Astrocyte of the cerebellum (primary cell): ENCODE measurements at regions of chr5 and their contacts with region 1.

Region 1: DNA sequence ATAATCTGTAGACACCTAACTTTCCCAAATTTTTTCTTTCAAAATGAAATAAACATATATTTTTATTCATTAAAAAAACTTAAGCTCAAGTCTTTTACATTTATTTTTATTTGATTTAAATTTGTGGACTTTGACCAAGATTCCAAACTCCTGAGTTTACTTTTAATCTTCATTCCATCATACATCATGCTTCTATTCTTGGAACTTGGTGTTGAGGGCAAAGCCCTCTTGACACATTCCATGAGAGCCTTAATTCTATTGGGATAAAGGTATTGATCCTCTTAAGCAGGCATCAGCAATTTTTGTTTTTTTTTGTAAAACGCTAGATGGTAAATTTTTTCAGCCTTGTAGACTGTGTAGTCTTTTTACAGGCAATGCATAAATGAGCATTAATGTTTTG is 53.6 kb downstream of the FBXO4 start:
- DNase-seq: no peak
- H3K4me3 ChIP-seq: no peak overlapping the region
- CTCF ChIP-seq: no peak

Region 2: GRCh38 chr5:41695920-41696582 is 282.6 kb before region 1 on chr5:
- in situ Hi-C with region 1: no loop called
- DNase-seq: no peak
- H3K4me3 ChIP-seq: no peak overlapping the region
- CTCF ChIP-seq: peak; percentile 35

Region 3: DNA sequence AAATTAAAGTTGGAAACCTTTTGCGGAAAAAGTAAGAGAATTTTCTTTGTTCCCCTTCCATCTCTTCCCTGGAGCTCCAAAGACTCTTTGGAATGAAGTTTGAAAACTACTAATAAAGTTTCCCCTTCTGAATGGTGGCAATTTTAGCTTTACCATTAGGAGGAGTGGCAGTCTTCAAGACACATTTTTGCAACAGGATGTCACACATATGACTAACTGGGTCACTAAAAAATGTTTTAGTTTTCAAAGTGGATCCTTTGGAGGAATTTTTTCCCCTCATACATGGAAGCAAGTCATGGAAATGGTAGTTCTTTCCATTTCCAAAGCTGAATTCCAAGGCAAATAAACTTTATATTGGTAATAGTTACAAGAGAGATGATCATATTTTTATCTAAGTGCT is 38.0 kb before region 1 on chr5:
- in situ Hi-C with region 1: loop called (anchors 5 kb)
- DNase-seq: no peak
- H3K4me3 ChIP-seq: no peak overlapping the region
- CTCF ChIP-seq: no peak

Region 4: DNA sequence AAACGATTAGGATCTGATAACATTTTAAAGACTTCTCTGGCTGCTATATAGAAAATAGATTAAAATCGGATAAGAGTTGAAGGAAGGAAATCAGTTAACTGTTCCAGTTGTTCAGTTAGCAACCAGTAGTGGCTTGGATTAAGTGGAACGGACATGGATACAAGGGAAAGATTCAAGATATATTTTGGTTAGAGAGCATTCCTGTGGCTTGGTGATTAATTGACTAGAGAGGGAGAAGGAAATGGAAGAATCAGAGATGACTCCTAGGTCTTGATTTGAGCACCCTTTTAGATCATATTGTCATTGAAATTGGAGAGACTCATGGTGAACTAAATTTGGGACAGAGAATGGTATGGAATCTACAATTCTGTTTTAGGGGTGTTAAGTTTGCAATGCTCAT is 42.4 kb after region 1 on chr5:
- in situ Hi-C with region 1: no loop called
- DNase-seq: no peak
- H3K4me3 ChIP-seq: no peak overlapping the region
- CTCF ChIP-seq: no peak